Mammary epithelial cell (primary cell): ENCODE measurements at regions of chr11 and their contacts with region 1.

Region 1: DNA sequence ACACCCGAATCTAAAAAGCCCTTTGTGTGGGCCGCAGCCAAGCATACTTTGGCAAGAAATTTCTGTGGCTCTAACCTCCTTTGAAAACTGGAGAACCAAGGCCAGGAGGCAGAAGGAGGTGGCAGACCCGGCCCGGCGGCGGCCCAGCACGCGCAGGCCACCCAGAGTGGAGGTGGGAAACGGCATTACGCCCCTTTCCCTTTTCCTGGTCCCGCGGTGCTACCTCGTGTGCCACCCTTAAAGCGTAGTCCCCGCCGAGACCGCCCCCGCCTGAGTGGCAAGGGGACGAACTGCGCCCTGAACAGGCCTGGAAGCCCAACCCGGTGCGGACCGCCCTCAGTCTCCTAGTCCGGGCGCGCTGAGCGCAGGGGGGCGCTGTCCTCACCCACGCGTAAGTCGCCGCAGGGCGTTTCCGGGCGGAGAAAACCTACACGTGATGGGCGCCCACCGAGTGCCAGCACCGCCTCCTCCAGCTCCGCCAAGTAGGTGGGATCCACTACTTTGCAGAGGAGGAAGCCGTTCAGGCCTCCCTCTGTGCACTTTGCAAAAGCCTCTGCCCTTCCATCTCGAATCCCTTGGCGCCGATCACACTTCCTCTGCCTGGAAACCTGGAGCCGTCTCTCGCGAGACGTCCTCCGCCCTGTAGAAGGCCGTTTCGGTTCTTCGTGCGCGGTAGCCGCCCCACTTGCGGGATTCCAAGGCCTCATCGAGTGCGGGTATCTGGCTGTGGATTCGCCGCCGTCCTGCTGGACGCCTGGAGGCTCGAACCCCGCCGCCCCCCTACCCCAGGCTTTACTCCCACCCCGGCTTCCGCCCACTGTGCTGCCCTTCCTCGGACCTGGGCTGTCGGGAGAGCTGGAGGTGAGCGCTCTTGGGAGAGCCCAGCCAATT is at the start of gene ACCS:
- DNase-seq: peak; percentile 71
- H3K4me3 ChIP-seq: peak within 1 kb of the TSS; percentile 58 to 77 (median 73)
- H3K27ac ChIP-seq: peak within 1 kb of the TSS; percentile 69
- H3K4me1 ChIP-seq: peaks cover 14% of the 10 kb centered on the region
- H3K27me3 ChIP-seq: no peaks in the 10 kb centered on the region
- CTCF ChIP-seq: peak; percentile 51 to 76
- total RNA-seq, gene ACCS: 6.8 to 13.0 TPM

Region 2: GRCh38 chr11:43997022-43997665 is 68.9 kb before region 1 on chr11:
- CTCF ChIA-PET with region 1: no interaction called
- dilution Hi-C with region 1: loop called (anchors 5 kb)
- in situ Hi-C with region 1: no loop called
- intact Hi-C with region 1: no loop called
- DNase-seq: no peak
- H3K4me3 ChIP-seq: no peak overlapping the region
- H3K27ac ChIP-seq: no peak overlapping the region
- H3K4me1 ChIP-seq: no peaks in the 10 kb centered on the region
- H3K27me3 ChIP-seq: peaks cover 2% of the 10 kb centered on the region
- CTCF ChIP-seq: no peak

Region 3: DNA sequence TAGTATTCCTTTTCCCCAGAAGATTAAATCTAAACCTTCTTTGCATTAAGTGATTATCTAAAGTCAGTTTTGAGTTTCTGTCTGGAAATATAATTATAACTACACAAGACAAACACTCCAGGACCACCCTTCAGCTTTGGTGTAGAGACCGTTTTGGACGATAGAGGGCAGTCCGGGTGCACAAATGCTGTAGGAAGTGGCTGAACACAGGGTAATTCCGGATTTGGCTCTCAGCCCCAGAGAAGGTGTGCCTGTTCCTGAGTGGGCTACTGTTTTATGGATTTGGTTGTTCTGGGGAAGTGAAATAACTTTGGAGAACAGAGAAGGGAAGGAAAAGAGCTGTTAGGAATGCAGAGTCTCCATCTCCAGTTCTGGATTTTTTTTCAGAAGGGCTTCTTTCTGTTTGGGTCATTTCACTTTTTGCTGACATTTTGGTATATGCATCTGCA is 44.2 kb after region 1 on chr11:
- CTCF ChIA-PET with region 1: no interaction called
- dilution Hi-C with region 1: no loop called
- in situ Hi-C with region 1: no loop called
- intact Hi-C with region 1: no loop called
- DNase-seq: peak; percentile 32
- H3K4me3 ChIP-seq: no peak overlapping the region
- H3K27ac ChIP-seq: no peak overlapping the region
- H3K4me1 ChIP-seq: peaks cover 4% of the 10 kb centered on the region
- H3K27me3 ChIP-seq: no peaks in the 10 kb centered on the region
- CTCF ChIP-seq: peak; percentile 78 to 84